Gastrocnemius medialis (tissue), 4 donors: ENCODE measurements at regions of chr14 and their contacts with region 1.

Region 1: DNA sequence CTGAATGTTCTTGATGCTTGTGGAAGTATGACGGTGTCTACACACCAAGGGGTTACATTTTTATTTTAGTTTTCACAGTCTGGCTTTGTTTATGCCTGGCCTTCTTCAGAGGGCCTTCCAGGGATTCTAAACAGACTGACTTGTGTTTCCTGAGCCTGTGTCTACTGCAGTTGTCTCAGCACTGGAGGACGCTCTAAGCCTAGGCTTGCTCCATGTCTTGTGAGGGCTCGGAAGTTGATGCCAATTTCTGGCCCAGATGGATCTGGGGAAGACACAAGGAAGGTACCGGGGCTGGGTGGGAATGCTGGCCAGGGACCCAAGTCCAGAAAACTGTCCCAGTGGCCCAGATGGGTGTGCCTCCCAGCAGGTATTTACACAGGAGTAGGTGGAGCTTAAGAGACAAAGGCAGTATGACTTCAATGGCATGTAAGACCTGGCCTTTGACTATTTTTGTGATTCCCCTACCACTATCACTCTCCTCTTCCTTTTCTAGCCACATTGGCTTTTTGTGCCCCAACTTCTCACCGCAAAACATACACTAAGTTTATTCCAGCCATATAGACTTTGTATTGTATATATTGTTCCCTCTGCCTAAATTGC is 56.9 kb downstream of the GPR137C start:
- DNase-seq: no peak
- ATAC-seq: no peak
- H3K4me3 ChIP-seq: no peak overlapping the region
- H3K27ac ChIP-seq: no peak overlapping the region
- H3K4me1 ChIP-seq: no peaks in the 10 kb centered on the region
- H3K27me3 ChIP-seq: no peaks in the 10 kb centered on the region
- CTCF ChIP-seq: no peak
- POLR2A ChIP-seq: no peak

Region 2: DNA sequence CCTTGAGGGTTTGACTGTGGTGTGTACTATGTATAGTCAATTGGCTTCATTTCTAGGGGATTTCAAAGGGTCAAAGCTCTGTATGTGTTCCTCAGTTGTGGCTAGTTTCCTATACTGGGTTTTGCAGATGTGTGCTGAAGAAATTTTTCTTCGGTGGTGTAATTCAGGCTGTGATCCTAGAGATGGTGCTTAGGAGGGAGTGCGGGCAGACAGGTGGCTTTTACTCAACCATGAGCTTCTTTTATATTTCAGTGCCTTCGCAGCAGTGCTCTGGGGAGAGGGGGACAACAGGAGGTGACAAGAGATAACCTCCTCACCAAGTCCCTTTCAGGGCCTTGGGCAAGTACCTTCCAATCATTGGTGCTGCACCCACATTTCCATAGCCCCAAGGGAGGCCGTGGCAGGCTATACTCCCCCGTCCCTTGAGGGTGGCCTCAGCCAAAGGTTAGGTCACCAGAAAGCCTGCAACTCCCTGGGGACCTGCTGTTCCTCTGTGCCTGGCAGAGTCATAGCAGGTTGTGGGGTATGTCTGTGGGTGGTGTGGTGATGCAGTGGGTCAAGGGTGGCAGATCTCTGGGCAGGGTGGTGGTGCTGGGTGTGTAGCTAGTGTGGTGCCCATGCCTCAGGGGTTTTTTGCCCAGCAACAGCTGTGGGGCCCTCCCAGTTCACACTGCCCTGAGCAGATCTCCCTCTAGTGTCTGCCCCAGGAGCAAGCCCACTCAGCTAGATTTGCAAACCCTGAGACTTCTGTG is 1406.5 kb before region 1 on chr14:
- in situ Hi-C with region 1: no loop called
- intact Hi-C with region 1: loop called (anchors 5 kb)
- DNase-seq: no peak
- ATAC-seq: no peak
- H3K4me3 ChIP-seq: no peak overlapping the region
- H3K27ac ChIP-seq: no peak overlapping the region
- H3K4me1 ChIP-seq: no peaks in the 10 kb centered on the region
- H3K27me3 ChIP-seq: no peaks in the 10 kb centered on the region
- CTCF ChIP-seq: no peak
- POLR2A ChIP-seq: no peak

Region 3: DNA sequence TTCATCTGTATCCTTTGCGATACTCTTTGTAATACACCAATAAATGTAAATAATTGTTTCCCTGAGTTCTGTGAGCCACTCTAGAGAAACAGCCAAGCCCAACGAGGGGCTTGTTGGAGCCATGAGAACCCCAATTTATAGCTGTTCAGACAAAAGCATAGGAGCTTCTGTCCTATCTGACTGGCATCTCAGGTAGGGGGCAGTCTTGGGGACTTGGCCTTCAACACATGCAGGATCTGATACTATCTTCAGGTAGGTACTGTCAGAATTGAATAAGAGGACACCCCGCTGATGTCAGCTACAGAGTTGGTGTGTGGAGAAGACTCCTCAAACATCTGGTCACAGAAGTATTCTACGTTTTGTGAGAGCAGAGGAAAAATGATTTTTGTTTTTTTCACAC is 82.5 kb before region 1 on chr14:
- in situ Hi-C with region 1: no loop called
- intact Hi-C with region 1: no loop called
- DNase-seq: no peak
- ATAC-seq: no peak
- H3K4me3 ChIP-seq: no peak overlapping the region
- H3K27ac ChIP-seq: no peak overlapping the region
- H3K4me1 ChIP-seq: no peaks in the 10 kb centered on the region
- H3K27me3 ChIP-seq: no peaks in the 10 kb centered on the region
- CTCF ChIP-seq: no peak
- POLR2A ChIP-seq: no peak